Activated CD4-positive, alpha-beta memory T cell treated with anti-CD3 and anti-CD28 coated beads for 36 hours (primary cell): ENCODE measurements at regions of chr3 and their contacts with region 1.

Region 1: GRCh38 chr3:49445381-49445780 is 16.3 kb upstream of the NICN1 start:
- DNase-seq: no peak
- H3K4me3 Mint-ChIP-seq: no peak overlapping the region
- H3K27ac Mint-ChIP-seq: no peak overlapping the region
- H3K4me1 Mint-ChIP-seq: peaks cover 15% of the 10 kb centered on the region
- H3K27me3 Mint-ChIP-seq: no peaks in the 10 kb centered on the region

Region 2: GRCh38 chr3:48949376-48949717 is 496.0 kb before region 1 on chr3:
- CTCF ChIA-PET with region 1: no interaction called
- POLR2A ChIA-PET with region 1: no interaction called
- intact Hi-C with region 1: no loop called
- DNase-seq: no peak
- H3K4me3 Mint-ChIP-seq: no peak overlapping the region
- H3K27ac Mint-ChIP-seq: no peak overlapping the region
- H3K4me1 Mint-ChIP-seq: peaks cover 36% of the 10 kb centered on the region
- H3K27me3 Mint-ChIP-seq: no peaks in the 10 kb centered on the region

Region 3: DNA sequence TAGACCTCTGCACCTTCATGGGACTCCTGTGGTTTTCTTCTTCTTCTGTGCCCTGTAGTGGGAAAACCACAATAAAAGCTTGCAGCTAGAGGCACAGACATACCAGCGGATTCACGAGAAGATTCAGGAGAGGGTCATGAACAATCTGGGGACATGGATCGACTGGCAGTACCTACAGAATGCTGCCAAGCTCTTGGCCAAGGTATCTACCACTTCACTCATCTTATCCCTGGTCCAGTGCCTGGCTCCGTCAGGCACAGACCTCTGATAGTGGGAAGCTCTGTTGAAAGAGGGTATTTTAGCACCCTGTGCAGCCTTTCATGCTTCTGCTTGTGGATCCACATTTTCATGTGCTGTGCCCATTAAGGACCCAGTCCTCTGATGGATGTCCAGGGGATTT is 465.1 kb before region 1 on chr3:
- CTCF ChIA-PET with region 1: no interaction called
- POLR2A ChIA-PET with region 1: no interaction called
- intact Hi-C with region 1: no loop called
- DNase-seq: no peak
- H3K4me3 Mint-ChIP-seq: no peak overlapping the region
- H3K27ac Mint-ChIP-seq: no peak overlapping the region
- H3K4me1 Mint-ChIP-seq: peaks cover 3% of the 10 kb centered on the region
- H3K27me3 Mint-ChIP-seq: no peaks in the 10 kb centered on the region

Region 4: GRCh38 chr3:49013755-49014628 is 431.4 kb before region 1 on chr3:
- CTCF ChIA-PET with region 1: no interaction called
- POLR2A ChIA-PET with region 1: no interaction called
- intact Hi-C with region 1: no loop called
- DNase-seq: peak; percentile 64
- H3K4me3 Mint-ChIP-seq: no peak overlapping the region
- H3K27ac Mint-ChIP-seq: no peak overlapping the region
- H3K4me1 Mint-ChIP-seq: peaks cover 23% of the 10 kb centered on the region
- H3K27me3 Mint-ChIP-seq: no peaks in the 10 kb centered on the region

Region 5: DNA sequence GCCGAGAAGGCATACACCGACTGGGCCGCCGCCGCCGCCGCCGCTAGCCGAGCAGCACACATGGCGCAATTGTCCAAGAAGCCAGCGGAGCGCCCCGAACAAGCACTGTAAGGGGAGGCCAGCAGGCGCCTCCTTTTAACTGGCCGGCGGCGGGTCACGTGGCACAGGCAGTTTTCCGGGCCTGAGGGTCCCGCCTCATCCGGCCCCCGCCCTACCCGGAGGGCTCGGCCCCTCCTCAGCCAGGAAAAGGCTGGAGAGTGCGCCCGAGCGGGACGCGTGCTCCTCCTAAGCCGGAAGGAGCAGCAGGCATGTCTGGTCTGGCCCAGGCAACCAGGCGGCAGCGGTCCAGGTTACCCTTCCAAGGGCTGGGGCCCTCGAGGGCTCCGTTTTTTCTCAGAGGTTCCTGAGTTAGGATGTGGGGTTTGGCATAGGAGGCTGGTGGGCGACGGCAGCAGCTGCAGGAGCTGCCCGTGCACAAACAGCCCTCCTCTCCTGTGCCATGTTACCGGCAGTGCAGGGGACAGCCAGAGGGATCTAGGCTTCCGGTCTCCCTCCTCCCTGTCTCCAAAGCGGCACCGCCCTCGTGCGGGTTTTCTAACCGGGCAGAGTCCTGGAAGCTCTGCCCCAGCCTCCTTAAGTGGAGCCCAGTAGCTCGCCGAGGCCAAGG is 87.0 kb before region 1 on chr3 and contains the start of gene GPX1:
- CTCF ChIA-PET with region 1: interaction called, 7 read pairs
- POLR2A ChIA-PET with region 1: no interaction called
- intact Hi-C with region 1: loop called (anchors 5 kb)
- DNase-seq: peak; percentile 92
- H3K4me3 Mint-ChIP-seq: peak within 1 kb of the TSS; percentile 95
- H3K27ac Mint-ChIP-seq: peak within 1 kb of the TSS; percentile 92
- H3K4me1 Mint-ChIP-seq: peaks cover 22% of the 10 kb centered on the region
- H3K27me3 Mint-ChIP-seq: no peaks in the 10 kb centered on the region
- total RNA-seq, gene GPX1: 176 to 177 TPM